CD8-positive, alpha-beta T cell (primary cell): ENCODE measurements at regions of chrX and their contacts with region 1.

Region 1: GRCh38 chrX:79270401-79270800 is 96.7 kb downstream of the ITM2A start:
- DNase-seq: peak; percentile 47 to 86 (median 71)
- ATAC-seq: peak; percentile 94
- H3K4me3 ChIP-seq: no peak overlapping the region
- H3K4me3 Mint-ChIP-seq: no peak overlapping the region
- H3K27ac ChIP-seq: peak overlapping the region in 1 of 2 experiments; percentile 44
- H3K27ac Mint-ChIP-seq: peak overlapping the region; percentile 74
- H3K4me1 ChIP-seq: peaks cover 43% of the 10 kb centered on the region
- H3K4me1 Mint-ChIP-seq: peaks cover 44% of the 10 kb centered on the region
- H3K27me3 ChIP-seq: no peaks in the 10 kb centered on the region
- H3K27me3 Mint-ChIP-seq: no peaks in the 10 kb centered on the region
- CTCF ChIP-seq: peak; percentile 69

Region 2: DNA sequence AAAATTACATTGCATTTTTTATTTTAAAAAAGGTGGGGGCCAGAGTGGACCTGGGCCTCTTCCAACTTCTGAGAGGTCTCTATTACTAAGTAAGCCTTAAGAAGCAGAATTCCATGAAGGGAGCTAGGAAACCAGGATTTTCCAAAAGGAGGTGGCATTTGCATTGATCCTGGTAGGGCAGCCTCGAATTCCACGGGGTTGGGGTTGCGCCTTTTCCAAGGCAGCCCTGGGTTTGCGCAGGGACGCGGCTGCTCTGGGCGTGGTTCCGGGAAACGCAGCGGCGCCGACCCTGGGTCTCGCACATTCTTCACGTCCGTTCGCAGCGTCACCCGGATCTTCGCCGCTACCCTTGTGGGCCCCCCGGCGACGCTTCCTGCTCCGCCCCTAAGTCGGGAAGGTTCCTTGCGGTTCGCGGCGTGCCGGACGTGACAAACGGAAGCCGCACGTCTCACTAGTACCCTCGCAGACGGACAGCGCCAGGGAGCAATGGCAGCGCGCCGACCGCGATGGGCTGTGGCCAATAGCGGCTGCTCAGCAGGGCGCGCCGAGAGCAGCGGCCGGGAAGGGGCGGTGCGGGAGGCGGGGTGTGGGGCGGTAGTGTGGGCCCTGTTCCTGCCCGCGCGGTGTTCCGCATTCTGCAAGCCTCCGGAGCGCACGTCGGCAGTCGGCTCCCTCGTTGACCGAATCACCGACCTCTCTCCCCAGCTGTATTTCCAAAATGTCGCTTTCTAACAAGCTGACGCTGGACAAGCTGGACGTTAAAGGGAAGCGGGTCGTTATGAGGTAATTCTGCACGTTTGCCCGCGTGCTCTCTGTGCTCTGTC is 1166.6 kb before region 1 on chrX and contains the start of gene PGK1:
- CTCF ChIA-PET with region 1: no interaction called
- POLR2A ChIA-PET with region 1: no interaction called
- intact Hi-C with region 1: loop called in 1 of 2 experiments (anchors 10 kb)
- DNase-seq: peak; percentile 85 to 97 (median 90)
- ATAC-seq: peak; percentile 93
- H3K4me3 ChIP-seq: peak within 1 kb of the TSS; percentile 95 to 99
- H3K4me3 Mint-ChIP-seq: peak within 1 kb of the TSS; percentile 94
- H3K27ac ChIP-seq: peak within 1 kb of the TSS; percentile 98
- H3K27ac Mint-ChIP-seq: peak within 1 kb of the TSS; percentile 96
- H3K4me1 ChIP-seq: peaks cover 47% of the 10 kb centered on the region
- H3K4me1 Mint-ChIP-seq: peaks cover 46% of the 10 kb centered on the region
- H3K27me3 ChIP-seq: no peaks in the 10 kb centered on the region
- H3K27me3 Mint-ChIP-seq: no peaks in the 10 kb centered on the region
- CTCF ChIP-seq: no peak
- total RNA-seq, gene PGK1: 364 to 374 TPM

Region 3: GRCh38 chrX:78555401-78555980 is 714.9 kb before region 1 on chrX:
- CTCF ChIA-PET with region 1: interaction called, 5 read pairs
- POLR2A ChIA-PET with region 1: no interaction called
- intact Hi-C with region 1: loop called (anchors 1 kb)
- DNase-seq: peak in 2 of 9 experiments; percentile 34 to 52
- ATAC-seq: no peak
- H3K4me3 ChIP-seq: no peak overlapping the region
- H3K4me3 Mint-ChIP-seq: no peak overlapping the region
- H3K27ac ChIP-seq: no peak overlapping the region
- H3K27ac Mint-ChIP-seq: peak overlapping the region; percentile 85
- H3K4me1 ChIP-seq: no peaks in the 10 kb centered on the region
- H3K4me1 Mint-ChIP-seq: no peaks in the 10 kb centered on the region
- H3K27me3 ChIP-seq: no peaks in the 10 kb centered on the region
- H3K27me3 Mint-ChIP-seq: no peaks in the 10 kb centered on the region
- CTCF ChIP-seq: peak; percentile 68

Region 4: DNA sequence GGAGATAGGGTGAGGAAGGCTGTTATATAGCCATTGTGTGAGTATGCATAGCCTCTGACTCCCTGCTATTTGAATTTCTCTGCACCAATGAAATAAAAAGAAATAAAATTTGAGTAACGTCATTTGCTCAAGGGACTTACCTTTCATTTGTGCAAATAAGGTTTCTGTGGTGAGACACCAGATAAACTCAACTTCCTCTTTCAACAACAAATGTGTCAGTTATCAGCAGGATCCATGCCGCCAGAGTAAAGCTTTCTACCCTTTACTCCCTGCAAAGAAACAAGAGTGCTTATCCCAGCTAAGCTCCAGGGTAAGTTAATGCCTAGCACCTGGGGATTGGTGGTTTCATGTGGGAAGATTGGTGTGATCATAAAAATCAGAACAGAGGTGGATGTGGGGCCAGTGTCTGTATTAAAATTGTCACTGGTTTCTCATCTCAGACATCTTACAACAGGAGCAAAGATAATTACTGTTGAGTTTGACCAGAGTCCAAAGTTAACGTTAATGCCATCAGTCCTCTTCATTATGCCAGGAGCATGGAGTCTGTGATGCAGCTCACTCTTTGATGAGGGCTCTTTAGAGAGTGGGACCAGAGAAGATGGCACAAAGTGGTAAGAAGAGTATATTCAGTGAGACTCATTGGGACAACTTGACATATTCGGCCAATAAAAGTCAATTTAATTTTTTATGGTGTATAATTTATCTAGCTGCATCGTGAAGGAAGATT is 325.1 kb before region 1 on chrX and contains the start of gene P2RY10:
- CTCF ChIA-PET with region 1: no interaction called
- POLR2A ChIA-PET with region 1: no interaction called
- intact Hi-C with region 1: loop called (anchors 5 kb)
- DNase-seq: peak in 8 of 9 experiments; percentile 1 to 86 (median 39)
- ATAC-seq: peak; percentile 90
- H3K4me3 ChIP-seq: peak within 1 kb of the TSS; percentile 71 to 83
- H3K4me3 Mint-ChIP-seq: peak within 1 kb of the TSS; percentile 96
- H3K27ac ChIP-seq: peak within 1 kb of the TSS; percentile 81 to 89
- H3K27ac Mint-ChIP-seq: peak within 1 kb of the TSS; percentile 99
- H3K4me1 ChIP-seq: peaks cover 34% of the 10 kb centered on the region
- H3K4me1 Mint-ChIP-seq: peaks cover 66% of the 10 kb centered on the region
- H3K27me3 ChIP-seq: no peaks in the 10 kb centered on the region
- H3K27me3 Mint-ChIP-seq: no peaks in the 10 kb centered on the region
- CTCF ChIP-seq: no peak
- total RNA-seq, gene P2RY10: 76.1 to 81.2 TPM

Region 5: DNA sequence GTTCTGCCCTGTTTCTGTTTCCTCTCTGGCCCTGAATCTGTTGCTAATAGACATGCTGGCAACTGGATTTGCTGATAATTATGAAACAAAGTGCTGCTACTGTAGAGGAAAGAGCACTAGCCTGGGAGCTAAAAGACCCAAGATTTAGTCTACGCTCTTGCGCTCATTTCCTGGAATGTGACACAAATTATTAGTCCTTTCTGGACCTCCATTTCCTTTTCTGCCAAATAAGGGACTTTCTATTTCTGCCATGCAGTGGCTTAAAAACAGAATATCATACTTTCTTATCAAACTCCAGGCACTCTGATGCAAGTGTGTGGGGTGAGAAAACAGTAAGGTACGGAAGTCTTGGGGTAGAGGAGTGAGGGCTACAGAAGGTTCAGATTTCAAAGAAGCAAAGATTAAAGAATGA is 174.2 kb before region 1 on chrX:
- CTCF ChIA-PET with region 1: interaction called, 4 read pairs
- POLR2A ChIA-PET with region 1: interaction called, 3 read pairs
- intact Hi-C with region 1: loop called in 1 of 2 experiments (anchors 5 kb)
- DNase-seq: peak in 2 of 9 experiments; percentile 38 to 68
- ATAC-seq: peak; percentile 61
- H3K4me3 ChIP-seq: peak overlapping the region in 1 of 2 experiments; percentile 17
- H3K4me3 Mint-ChIP-seq: peak overlapping the region; percentile 62
- H3K27ac ChIP-seq: peak overlapping the region; percentile 55 to 93
- H3K27ac Mint-ChIP-seq: peak overlapping the region; percentile 91
- H3K4me1 ChIP-seq: peaks cover 32% of the 10 kb centered on the region
- H3K4me1 Mint-ChIP-seq: peaks cover 63% of the 10 kb centered on the region
- H3K27me3 ChIP-seq: no peaks in the 10 kb centered on the region
- H3K27me3 Mint-ChIP-seq: no peaks in the 10 kb centered on the region
- CTCF ChIP-seq: no peak

Region 6: GRCh38 chrX:79259073-79259689 is 11.2 kb before region 1 on chrX:
- CTCF ChIA-PET with region 1: interaction called, 3 read pairs
- POLR2A ChIA-PET with region 1: interaction called, 9 read pairs
- intact Hi-C with region 1: loop called in 1 of 2 experiments (anchors 1 kb)
- DNase-seq: peak; percentile 13 to 89 (median 40)
- ATAC-seq: peak; percentile 86
- H3K4me3 ChIP-seq: peak overlapping the region; percentile 22 to 36
- H3K4me3 Mint-ChIP-seq: peak overlapping the region; percentile 66
- H3K27ac ChIP-seq: peak overlapping the region; percentile 57 to 73
- H3K27ac Mint-ChIP-seq: peak overlapping the region; percentile 94
- H3K4me1 ChIP-seq: peaks cover 75% of the 10 kb centered on the region
- H3K4me1 Mint-ChIP-seq: peaks cover 81% of the 10 kb centered on the region
- H3K27me3 ChIP-seq: no peaks in the 10 kb centered on the region
- H3K27me3 Mint-ChIP-seq: no peaks in the 10 kb centered on the region
- CTCF ChIP-seq: no peak

Region 7: DNA sequence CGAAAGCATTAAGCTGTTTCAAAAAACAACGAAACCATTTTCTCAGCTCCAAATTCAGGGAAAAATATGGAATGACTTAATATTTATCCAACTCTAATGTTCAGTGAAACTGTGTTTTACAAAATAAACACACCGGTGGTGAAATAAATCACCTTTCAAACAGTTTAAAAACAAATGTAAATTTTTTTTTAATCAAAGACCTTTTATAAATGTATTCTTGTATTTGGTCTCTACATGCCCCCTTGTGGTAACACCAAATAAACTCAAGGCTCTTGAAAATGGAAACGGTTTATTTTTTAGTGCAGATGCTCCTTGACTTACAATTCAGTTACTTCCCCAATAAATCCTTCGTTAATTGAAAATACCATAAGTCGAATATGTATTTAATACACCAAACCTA is 142.6 kb after region 1 on chrX:
- CTCF ChIA-PET with region 1: interaction called, 4 read pairs
- POLR2A ChIA-PET with region 1: no interaction called
- intact Hi-C with region 1: loop called (anchors 5 kb)
- DNase-seq: peak in 2 of 9 experiments; percentile 49 to 64
- ATAC-seq: no peak
- H3K4me3 ChIP-seq: peak overlapping the region; percentile 25 to 27
- H3K4me3 Mint-ChIP-seq: peak overlapping the region; percentile 67
- H3K27ac ChIP-seq: no peak overlapping the region
- H3K27ac Mint-ChIP-seq: peak overlapping the region; percentile 32
- H3K4me1 ChIP-seq: no peaks in the 10 kb centered on the region
- H3K4me1 Mint-ChIP-seq: peaks cover 17% of the 10 kb centered on the region
- H3K27me3 ChIP-seq: no peaks in the 10 kb centered on the region
- H3K27me3 Mint-ChIP-seq: no peaks in the 10 kb centered on the region
- CTCF ChIP-seq: peak; percentile 55